Sigmoid colon (tissue), 7 donors: ENCODE measurements at regions of chr18 and their contacts with region 1.

Region 1: DNA sequence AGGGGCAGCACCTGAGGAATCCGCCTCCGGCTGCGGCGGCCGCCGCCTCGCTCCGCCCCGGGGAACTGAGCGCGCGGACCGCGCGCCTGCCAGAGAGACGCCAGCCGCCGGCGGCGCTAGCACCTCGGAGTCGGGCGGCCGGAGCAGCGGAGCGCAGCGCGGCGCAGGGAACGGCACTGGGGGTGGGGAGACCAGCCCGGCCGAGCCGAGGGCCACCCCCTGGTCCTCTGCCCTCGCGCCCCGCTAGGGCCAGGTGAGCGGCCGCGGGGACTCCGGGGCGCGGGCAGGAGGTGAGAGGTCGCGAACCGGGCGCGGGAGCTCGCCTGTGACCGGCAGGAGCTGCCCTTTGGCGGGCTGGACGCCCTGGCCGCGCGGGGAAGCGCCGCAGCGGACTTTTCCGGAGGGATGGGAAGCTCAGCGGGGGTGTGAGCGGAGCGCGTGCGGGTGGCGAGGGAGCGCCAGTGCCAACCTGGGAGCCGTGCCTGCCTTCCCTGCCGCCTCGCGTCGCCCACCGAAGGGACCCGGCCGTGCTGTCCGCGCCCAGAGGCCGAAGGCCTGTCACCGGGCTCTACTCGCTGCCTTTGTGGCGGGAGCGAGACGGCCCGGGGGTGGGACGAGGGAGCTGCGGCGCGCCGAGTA is at the start of gene GREB1L:
- DNase-seq: no peak
- H3K4me3 ChIP-seq: peak within 1 kb of the TSS; percentile 26 to 66 (median 52)
- H3K27ac ChIP-seq: peak within 1 kb of the TSS in 2 of 4 donors; percentile 27 to 77
- H3K4me1 ChIP-seq: peaks cover 0 to 24% (median 23%) of the 10 kb centered on the region in 4 donors
- H3K27me3 ChIP-seq: peaks cover 15 to 43% (median 34%) of the 10 kb centered on the region in 3 donors
- CTCF ChIP-seq: no peak
- EP300 ChIP-seq: no peak
- POLR2A ChIP-seq: no peak
- total RNA-seq, gene GREB1L: 2.1 to 12.1 (median 5.7) TPM

Region 2: DNA sequence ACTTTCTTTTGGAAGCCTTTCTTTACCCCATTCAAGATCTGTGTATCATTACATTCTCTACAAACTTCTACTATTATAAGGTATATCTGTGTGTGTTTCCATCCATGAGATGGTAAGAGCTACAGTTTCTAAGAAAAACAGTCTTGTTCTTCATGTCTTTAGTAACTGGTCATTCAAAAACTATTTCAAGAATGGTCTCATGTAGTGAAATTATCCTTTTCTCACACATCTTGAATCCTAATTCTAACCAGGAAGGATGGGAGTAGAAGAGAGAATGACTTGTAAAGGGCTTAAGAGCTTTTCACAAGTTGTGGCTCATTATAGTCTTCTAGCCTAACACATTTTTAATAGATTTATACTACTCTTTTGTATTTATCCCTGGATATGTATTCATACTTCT is 177.9 kb before region 1 on chr18:
- intact Hi-C with region 1: no loop called
- DNase-seq: no peak
- H3K4me3 ChIP-seq: no peak overlapping the region
- H3K27ac ChIP-seq: no peak overlapping the region
- H3K4me1 ChIP-seq: no peaks in the 10 kb centered on the region
- H3K27me3 ChIP-seq: no peaks in the 10 kb centered on the region
- CTCF ChIP-seq: no peak
- EP300 ChIP-seq: no peak
- POLR2A ChIP-seq: no peak

Region 3: DNA sequence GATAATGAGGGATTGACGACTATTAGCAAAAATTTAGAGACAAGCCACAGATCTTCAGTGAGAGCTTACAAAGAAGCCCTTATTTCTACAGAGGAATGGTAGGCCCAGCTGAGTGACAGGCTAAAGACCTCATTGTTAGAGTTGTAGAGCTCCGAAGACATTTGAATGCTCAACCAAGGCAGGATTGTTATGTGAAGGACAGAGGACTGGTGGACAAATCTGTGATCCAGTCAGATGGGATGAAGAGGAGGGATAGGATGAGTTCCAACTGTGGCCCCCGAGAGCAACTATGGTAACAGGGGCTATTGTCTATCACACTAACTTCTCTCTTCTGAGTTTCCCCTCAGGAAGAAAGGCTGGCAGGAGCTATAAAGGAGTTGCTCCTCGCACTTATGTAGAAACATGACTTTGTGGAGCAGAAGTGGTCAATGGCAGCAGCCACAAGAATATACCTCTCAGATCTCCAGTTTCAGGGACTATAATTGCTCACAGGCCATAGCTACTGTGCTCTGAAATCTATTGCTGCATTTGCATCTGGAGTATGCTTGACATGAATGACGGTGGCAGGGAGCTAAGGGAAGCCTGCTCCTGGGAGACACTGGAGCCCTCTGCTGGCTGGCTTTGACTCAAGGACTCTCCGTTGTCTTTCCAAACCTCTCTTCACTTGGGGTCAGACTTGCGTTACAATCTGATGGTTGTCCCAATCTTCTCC is 50.5 kb before region 1 on chr18:
- intact Hi-C with region 1: no loop called
- DNase-seq: no peak
- H3K4me3 ChIP-seq: no peak overlapping the region
- H3K27ac ChIP-seq: no peak overlapping the region
- H3K4me1 ChIP-seq: no peaks in the 10 kb centered on the region
- H3K27me3 ChIP-seq: no peaks in the 10 kb centered on the region
- CTCF ChIP-seq: peak in 2 of 4 experiments; percentile 20 to 32
- EP300 ChIP-seq: no peak
- POLR2A ChIP-seq: no peak

Region 4: GRCh38 chr18:21215485-21215884 is 26.8 kb before region 1 on chr18:
- intact Hi-C with region 1: loop called (anchors 2 kb)
- DNase-seq: no peak
- H3K4me3 ChIP-seq: no peak overlapping the region
- H3K27ac ChIP-seq: no peak overlapping the region
- H3K4me1 ChIP-seq: no peaks in the 10 kb centered on the region
- H3K27me3 ChIP-seq: no peaks in the 10 kb centered on the region
- CTCF ChIP-seq: no peak
- EP300 ChIP-seq: no peak
- POLR2A ChIP-seq: no peak

Region 5: GRCh38 chr18:21289827-21290226 is 47.6 kb after region 1 on chr18:
- intact Hi-C with region 1: no loop called
- DNase-seq: no peak
- H3K4me3 ChIP-seq: no peak overlapping the region
- H3K27ac ChIP-seq: no peak overlapping the region
- H3K4me1 ChIP-seq: peaks cover 0 to 13% (median 0%) of the 10 kb centered on the region in 4 donors
- H3K27me3 ChIP-seq: no peaks in the 10 kb centered on the region
- CTCF ChIP-seq: no peak
- EP300 ChIP-seq: no peak
- POLR2A ChIP-seq: no peak